Activated T-helper 1 cell treated with anti-CD3 and anti-CD28 coated beads, Interleukin-12 subunit alpha, Interleukin-12 subunit beta, Interleukin-2, Interleukin-4 antibody, amounts not matched to agents 30 ng/mL and 10 ng/mL and 1 ng/mL, durations not matched to agents 14 hours and 24 hours and 36 hours (primary cell): ENCODE measurements at regions of chr18 and their contacts with region 1.

Region 1: GRCh38 chr18:54444319-54444914 is 86.7 kb downstream of the C18orf54 start:
- DNase-seq: no peak
- H3K4me3 Mint-ChIP-seq: no peak overlapping the region
- H3K27ac Mint-ChIP-seq: no peak overlapping the region
- H3K4me1 Mint-ChIP-seq: no peaks in the 10 kb centered on the region
- H3K27me3 Mint-ChIP-seq: peaks cover 9% of the 10 kb centered on the region

Region 2: DNA sequence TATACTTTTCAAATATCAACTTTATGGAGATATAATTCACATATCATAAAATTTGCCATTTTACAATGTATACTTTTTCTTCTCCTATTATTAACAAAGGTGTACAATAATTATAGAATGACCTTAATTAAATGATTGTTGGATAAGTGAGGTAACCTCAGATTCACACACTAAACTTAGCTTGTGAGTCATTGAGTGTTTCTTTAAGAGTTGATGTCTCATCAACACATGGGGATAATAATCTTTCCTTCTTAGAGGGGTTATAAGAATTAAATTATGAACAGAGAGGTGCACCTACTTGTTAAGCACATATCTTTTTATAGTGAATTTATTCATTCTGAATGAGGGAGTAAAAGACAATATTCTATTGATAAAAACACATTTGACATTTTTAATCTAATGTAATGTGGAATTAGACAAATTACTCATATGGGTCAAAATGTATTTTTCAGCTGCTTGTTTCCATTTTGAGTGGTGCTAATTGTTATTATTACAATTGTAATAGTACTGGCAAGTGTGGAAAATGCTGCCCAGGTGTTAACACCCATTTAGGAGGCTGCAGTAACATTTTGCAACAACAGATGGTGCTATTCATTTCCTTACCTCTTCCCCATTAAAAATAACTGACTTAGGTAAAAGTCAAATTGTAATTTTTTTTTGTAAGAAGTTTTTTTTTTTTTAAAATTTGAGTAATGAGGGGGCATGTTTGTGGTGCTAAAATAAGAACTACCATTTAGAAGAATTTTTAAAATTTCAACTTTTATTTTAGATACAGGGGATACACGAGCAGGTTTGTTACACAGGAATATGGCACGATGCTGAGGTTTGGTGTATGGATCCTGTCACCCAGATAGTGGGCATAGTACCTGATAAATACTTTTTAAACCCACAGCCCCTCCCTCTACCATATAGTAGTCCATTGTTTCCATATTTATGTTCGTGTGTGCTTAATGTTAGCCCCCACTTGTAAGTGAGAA is 114.5 kb after region 1 on chr18:
- intact Hi-C with region 1: loop called (anchors 1 kb)
- DNase-seq: no peak
- H3K4me3 Mint-ChIP-seq: no peak overlapping the region
- H3K27ac Mint-ChIP-seq: no peak overlapping the region
- H3K4me1 Mint-ChIP-seq: no peaks in the 10 kb centered on the region
- H3K27me3 Mint-ChIP-seq: no peaks in the 10 kb centered on the region

Region 3: DNA sequence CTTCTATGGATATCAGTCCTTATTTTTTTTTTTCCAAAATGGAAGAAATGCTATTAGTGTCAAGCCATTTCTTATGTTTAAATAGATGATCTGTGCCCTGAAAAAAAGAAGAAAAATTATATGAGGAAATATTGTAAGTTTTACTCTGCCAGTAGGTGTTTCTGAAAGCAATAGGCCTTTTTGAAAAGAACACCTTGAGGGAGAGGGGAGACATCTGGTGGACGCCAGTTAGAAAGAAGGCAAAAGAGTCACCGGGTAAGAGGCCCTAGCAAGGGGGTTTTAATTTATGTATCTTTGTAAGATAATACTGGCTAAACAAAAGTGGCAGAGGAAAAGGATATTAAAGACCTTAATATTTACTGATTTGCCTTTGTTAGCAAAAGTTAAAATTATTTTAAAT is 202.8 kb after region 1 on chr18:
- intact Hi-C with region 1: loop called (anchors 10 kb)
- DNase-seq: no peak
- H3K4me3 Mint-ChIP-seq: no peak overlapping the region
- H3K27ac Mint-ChIP-seq: no peak overlapping the region
- H3K4me1 Mint-ChIP-seq: no peaks in the 10 kb centered on the region
- H3K27me3 Mint-ChIP-seq: peaks cover 11% of the 10 kb centered on the region

Region 4: GRCh38 chr18:54958657-54959625 is 514.5 kb after region 1 on chr18 and contains the start of gene CCDC68:
- intact Hi-C with region 1: loop called (anchors 10 kb)
- DNase-seq: no peak
- H3K4me3 Mint-ChIP-seq: peak within 1 kb of the TSS; percentile 11
- H3K27ac Mint-ChIP-seq: no peak within 1 kb of the TSS
- H3K4me1 Mint-ChIP-seq: no peaks in the 10 kb centered on the region
- H3K27me3 Mint-ChIP-seq: peaks cover 54% of the 10 kb centered on the region
- total RNA-seq, gene CCDC68: not detected in 2 replicates